Sigmoid colon (tissue), 7 donors: ENCODE measurements at regions of chr3 and their contacts with region 1.

Region 1: GRCh38 chr3:185362850-185363661 is at the start of gene MAP3K13:
- DNase-seq: peak; percentile 93
- H3K4me3 ChIP-seq: peak within 1 kb of the TSS; percentile 47 to 62 (median 55)
- H3K27ac ChIP-seq: peak within 1 kb of the TSS; percentile 74 to 80 (median 78)
- H3K4me1 ChIP-seq: peaks cover 0 to 27% (median 7%) of the 10 kb centered on the region in 4 donors
- H3K27me3 ChIP-seq: no peaks in the 10 kb centered on the region
- CTCF ChIP-seq: no peak
- EP300 ChIP-seq: no peak
- POLR2A ChIP-seq: no peak
- total RNA-seq, gene MAP3K13: 24.5 to 26.9 (median 25.9) TPM

Region 2: GRCh38 chr3:185507883-185508282 is 144.8 kb after region 1 on chr3:
- intact Hi-C with region 1: no loop called
- DNase-seq: no peak
- H3K4me3 ChIP-seq: no peak overlapping the region
- H3K27ac ChIP-seq: no peak overlapping the region
- H3K4me1 ChIP-seq: peaks cover 0 to 4% (median 0%) of the 10 kb centered on the region in 4 donors
- H3K27me3 ChIP-seq: no peaks in the 10 kb centered on the region
- CTCF ChIP-seq: no peak
- EP300 ChIP-seq: no peak
- POLR2A ChIP-seq: no peak

Region 3: GRCh38 chr3:185552358-185552877 is 189.4 kb after region 1 on chr3 and contains the start of gene LIPH:
- intact Hi-C with region 1: loop called (anchors 10 kb)
- DNase-seq: no peak
- H3K4me3 ChIP-seq: no peak within 1 kb of the TSS
- H3K27ac ChIP-seq: no peak within 1 kb of the TSS
- H3K4me1 ChIP-seq: peaks cover 0 to 4% (median 0%) of the 10 kb centered on the region in 4 donors
- H3K27me3 ChIP-seq: no peaks in the 10 kb centered on the region
- CTCF ChIP-seq: no peak
- EP300 ChIP-seq: no peak
- POLR2A ChIP-seq: peak in 1 of 2 donors; percentile 74
- total RNA-seq, gene LIPH: 0.14 to 0.36 TPM in 2 of 4 donors, not detected in the others

Region 4: GRCh38 chr3:185585859-185586685 is 223.0 kb after region 1 on chr3 and contains the start of gene SENP2:
- intact Hi-C with region 1: loop called (anchors 10 kb)
- DNase-seq: peak; percentile 99
- H3K4me3 ChIP-seq: peak within 1 kb of the TSS; percentile 80 to 85 (median 82)
- H3K27ac ChIP-seq: peak within 1 kb of the TSS; percentile 94 to 96 (median 96)
- H3K4me1 ChIP-seq: peaks cover 0 to 36% (median 26%) of the 10 kb centered on the region in 4 donors
- H3K27me3 ChIP-seq: no peaks in the 10 kb centered on the region
- CTCF ChIP-seq: no peak
- EP300 ChIP-seq: no peak
- POLR2A ChIP-seq: peak; percentile 83 to 86
- total RNA-seq, gene SENP2: 24.8 to 28.5 (median 26.7) TPM